ENCODE measurements at regions of chr4 and their contacts with region 1.

Region 1: GRCh38 chr4:109977854-109978501 is 65.3 kb downstream of the EGF start:
- DNase-seq: no peak
- ATAC-seq: no peak
- H3K4me3 ChIP-seq: no peak overlapping the region
- H3K27ac ChIP-seq: no peak overlapping the region
- H3K4me1 ChIP-seq: no peaks in the 10 kb centered on the region
- H3K27me3 ChIP-seq: peaks cover 3% of the 10 kb centered on the region
- CTCF ChIP-seq: peak; percentile 56; the same call in 1 of the 2 replicates

Region 2: DNA sequence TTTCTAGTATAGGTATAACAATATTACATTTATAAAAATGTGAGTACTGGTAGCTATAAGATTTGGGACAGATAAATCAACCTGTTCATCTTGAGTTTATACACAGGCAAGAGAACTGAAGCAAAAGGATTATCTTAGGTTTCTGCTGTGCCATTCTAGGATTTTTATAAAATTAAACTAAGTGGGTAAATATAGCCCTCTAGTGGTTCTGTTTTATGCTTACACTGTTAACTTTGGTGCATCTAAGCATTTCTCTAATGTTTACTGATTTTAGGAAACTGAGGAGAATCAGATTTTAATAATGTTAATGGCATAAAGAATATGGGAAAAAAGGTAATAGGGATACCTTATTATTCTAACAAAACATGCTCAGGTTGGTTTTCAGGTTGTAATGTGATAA is 151.3 kb before region 1 on chr4:
- CTCF ChIA-PET with region 1: no interaction called
- POLR2A ChIA-PET with region 1: no interaction called
- in situ Hi-C with region 1: no loop called
- intact Hi-C with region 1: loop called (anchors 10 kb)
- DNase-seq: no peak
- ATAC-seq: no peak
- H3K4me3 ChIP-seq: no peak overlapping the region
- H3K27ac ChIP-seq: no peak overlapping the region
- H3K4me1 ChIP-seq: no peaks in the 10 kb centered on the region
- H3K27me3 ChIP-seq: no peaks in the 10 kb centered on the region
- CTCF ChIP-seq: peak; percentile 41; the same call in 1 of the 2 replicates

Measured in Panc1 (cell line).